GM10248 (cell line): ENCODE measurements at regions of chr11 and their contacts with region 1.

Region 1: GRCh38 chr11:36564376-36565030 is 3.3 kb upstream of the RAG1 start:
- DNase-seq: peak; percentile 34
- CTCF ChIP-seq: peak; percentile 70

Region 2: DNA sequence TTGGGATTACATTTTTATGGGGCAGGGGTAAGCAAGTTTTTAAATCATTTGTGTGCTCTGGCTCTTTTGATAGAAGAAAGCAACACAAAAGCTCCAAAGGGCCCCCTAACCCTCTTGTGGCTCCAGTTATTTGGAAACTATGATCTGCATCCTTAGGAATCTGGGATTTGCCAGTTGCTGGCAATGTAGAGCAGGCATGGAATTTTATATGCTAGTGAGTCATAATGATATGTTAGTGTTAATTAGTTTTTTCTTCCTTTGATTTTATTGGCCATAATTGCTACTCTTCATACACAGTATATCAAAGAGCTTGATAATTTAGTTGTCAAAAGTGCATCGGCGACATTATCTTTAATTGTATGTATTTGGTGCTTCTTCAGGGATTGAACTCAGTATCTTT is 13.4 kb after region 1 on chr11:
- CTCF ChIA-PET with region 1: interaction called, 57 read pairs
- POLR2A ChIA-PET with region 1: no interaction called
- DNase-seq: no peak
- CTCF ChIP-seq: no peak

Region 3: GRCh38 chr11:36586543-36586942 is 22.0 kb after region 1 on chr11:
- CTCF ChIA-PET with region 1: interaction called, 12 read pairs
- POLR2A ChIA-PET with region 1: no interaction called
- DNase-seq: no peak
- CTCF ChIP-seq: no peak

Region 4: GRCh38 chr11:36619502-36619901 is 55.0 kb after region 1 on chr11:
- CTCF ChIA-PET with region 1: interaction called, 25 read pairs
- POLR2A ChIA-PET with region 1: no interaction called
- DNase-seq: no peak
- CTCF ChIP-seq: no peak

Region 5: GRCh38 chr11:36672813-36673450 is 108.4 kb after region 1 on chr11:
- CTCF ChIA-PET with region 1: interaction called, 86 read pairs
- POLR2A ChIA-PET with region 1: no interaction called
- DNase-seq: no peak
- CTCF ChIP-seq: peak; percentile 76

Region 6: GRCh38 chr11:36702330-36703055 is 138.0 kb after region 1 on chr11:
- CTCF ChIA-PET with region 1: interaction called, 55 read pairs
- POLR2A ChIA-PET with region 1: no interaction called
- DNase-seq: peak; percentile 57
- CTCF ChIP-seq: peak; percentile 77

Region 7: GRCh38 chr11:36738292-36738861 is 173.9 kb after region 1 on chr11:
- CTCF ChIA-PET with region 1: interaction called, 340 read pairs
- POLR2A ChIA-PET with region 1: no interaction called
- DNase-seq: no peak
- CTCF ChIP-seq: no peak